ENCODE measurements at regions of chr15 and their contacts with region 1.

Region 1: GRCh38 chr15:85044251-85044853 is 62.7 kb downstream of the PDE8A start:
- DNase-seq: peak in 1 of 2 donors; percentile 31
- ATAC-seq: peak; percentile 70 to 91 (median 86)
- H3K4me3 ChIP-seq: no peak overlapping the region
- H3K27ac ChIP-seq: peak overlapping the region; percentile 54
- H3K4me1 ChIP-seq: peaks cover 28% of the 10 kb centered on the region
- H3K27me3 ChIP-seq: no peaks in the 10 kb centered on the region
- CTCF ChIP-seq: peak; percentile 69

Region 2: DNA sequence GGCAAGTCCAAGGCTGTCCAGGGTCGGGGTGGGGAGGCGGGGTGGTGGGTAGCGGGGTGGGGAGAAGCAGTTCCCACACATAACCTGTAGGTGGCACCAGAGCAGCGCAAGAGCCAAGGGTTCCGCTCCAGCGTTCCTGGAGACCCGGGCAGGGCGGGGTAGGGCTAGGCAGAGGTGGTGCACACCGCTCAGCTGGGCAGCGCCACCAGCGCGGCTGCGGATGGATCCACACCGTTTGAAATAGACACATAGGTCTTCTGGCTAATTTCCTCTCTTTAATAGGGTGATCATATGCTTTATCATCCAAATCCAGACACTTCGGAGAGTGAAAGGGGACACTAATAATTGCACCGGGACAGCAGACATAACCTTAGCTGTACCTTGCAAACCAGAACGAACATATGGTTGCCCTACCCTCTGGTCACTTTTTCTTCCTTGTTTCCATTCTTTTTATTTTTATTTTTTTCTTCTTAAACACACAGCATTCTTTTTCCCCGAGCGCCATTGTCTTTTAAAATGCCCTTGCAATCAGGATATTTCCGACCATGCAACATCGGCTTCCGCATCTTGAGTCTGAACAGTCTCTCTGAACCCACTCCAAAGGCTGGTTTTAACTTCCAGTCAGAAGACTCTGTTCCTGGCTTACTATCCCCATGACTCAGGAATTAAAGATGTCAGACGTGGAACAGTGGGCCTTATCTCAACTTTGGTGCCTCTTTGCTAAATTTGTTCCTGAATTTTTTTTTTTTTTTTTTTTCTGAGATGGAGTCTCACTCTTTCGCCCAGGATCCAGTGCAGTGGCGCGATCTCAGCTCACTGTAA is 456.1 kb before region 1 on chr15:
- intact Hi-C with region 1: loop called in 1 of 2 experiments (anchors 10 kb)
- DNase-seq: peak; percentile 85 to 92
- ATAC-seq: peak; percentile 99 to 100 (median 100)
- H3K4me3 ChIP-seq: peak overlapping the region; percentile 60
- H3K27ac ChIP-seq: no peak overlapping the region
- H3K4me1 ChIP-seq: peaks cover 4% of the 10 kb centered on the region
- H3K27me3 ChIP-seq: no peaks in the 10 kb centered on the region
- CTCF ChIP-seq: peak; percentile 85

Region 3: DNA sequence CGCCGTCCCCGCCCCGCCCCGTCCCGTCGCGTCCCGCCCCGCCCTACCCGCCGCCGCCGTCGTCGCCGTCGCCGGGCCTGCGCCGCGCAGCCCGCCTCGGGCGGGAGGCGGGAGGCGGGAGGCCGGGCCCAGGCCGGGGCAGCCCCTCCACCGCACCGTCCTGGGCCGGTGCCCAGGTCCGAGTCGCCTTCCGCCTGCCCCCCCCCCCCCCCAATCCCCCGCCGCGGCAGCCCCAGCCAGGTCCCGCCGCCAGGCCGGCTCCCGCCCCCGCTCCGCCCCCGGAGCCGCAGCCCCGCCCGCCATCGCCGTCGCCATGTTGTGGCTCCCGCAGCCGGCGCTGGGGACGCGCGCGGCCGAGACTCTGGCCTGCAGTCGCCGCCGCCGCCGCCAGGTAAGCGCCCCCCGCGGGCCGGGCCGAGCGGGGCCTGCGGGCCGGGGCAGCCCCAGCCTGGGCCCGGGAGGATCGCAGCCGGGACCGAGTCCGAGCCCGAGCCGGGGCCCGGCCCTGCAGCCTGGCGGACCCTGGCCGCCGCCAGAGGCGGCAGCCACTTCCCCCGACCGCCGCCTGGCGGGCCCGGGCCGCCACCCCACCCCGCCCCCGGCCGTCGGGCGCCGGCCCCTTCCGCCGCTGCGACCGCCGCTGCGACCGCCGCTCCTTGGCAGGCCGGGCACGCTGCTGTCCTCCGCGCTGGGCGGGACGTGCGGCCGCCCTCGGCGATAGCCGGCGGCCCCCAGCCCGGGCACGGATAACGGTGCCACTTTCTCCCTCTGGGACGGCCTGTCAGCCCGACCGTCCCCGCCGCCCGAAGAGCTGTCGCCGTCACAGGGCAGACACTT is 295.9 kb before region 1 on chr15 and contains the start of gene ZNF592:
- intact Hi-C with region 1: no loop called
- DNase-seq: peak; percentile 88 to 93
- ATAC-seq: peak; percentile 66 to 76 (median 72)
- H3K4me3 ChIP-seq: peak within 1 kb of the TSS; percentile 92
- H3K27ac ChIP-seq: peak within 1 kb of the TSS; percentile 99
- H3K4me1 ChIP-seq: peaks cover 67% of the 10 kb centered on the region
- H3K27me3 ChIP-seq: no peaks in the 10 kb centered on the region
- CTCF ChIP-seq: peak; percentile 58
- total RNA-seq, gene ZNF592: 33.4 to 39.5 (median 35.5) TPM

Region 4: DNA sequence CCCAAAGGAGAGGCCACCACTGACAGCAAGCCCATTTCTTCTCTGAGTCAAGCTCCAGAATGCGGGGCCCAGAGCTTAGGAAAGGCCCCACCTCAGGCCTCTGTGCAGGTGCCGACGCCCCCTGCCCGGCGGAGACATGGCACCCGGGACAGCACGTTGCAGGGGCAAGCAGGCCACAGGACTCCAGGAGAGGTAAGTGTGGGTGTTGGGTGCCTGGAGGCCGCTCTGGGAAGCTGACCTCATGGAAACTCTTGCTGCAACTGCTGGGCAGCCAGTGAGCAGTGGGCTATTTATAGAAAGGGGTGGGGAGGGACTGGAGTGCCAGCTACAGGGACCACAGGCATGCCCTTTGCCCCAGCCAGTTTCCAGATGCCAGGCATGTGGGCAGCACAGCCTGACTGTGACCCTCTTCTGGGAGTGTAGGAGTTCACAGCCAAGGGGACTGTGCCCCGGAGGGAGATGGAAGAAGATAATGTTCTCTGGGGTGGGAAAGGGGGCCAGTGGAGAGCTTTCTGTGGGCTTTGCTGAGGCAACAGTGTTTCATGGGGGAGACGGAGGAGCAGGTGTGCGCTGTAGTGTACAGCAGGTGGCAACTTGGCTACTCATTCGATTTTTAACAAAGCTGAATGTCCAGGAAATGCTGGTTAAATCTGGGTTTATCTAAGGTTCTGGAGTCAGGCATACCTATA is 203.5 kb before region 1 on chr15:
- intact Hi-C with region 1: loop called in 1 of 2 experiments (anchors 10 kb)
- DNase-seq: peak; percentile 80 to 93
- ATAC-seq: peak; percentile 80 to 86 (median 83)
- H3K4me3 ChIP-seq: peak overlapping the region; percentile 38
- H3K27ac ChIP-seq: peak overlapping the region; percentile 99
- H3K4me1 ChIP-seq: peaks cover 79% of the 10 kb centered on the region
- H3K27me3 ChIP-seq: no peaks in the 10 kb centered on the region
- CTCF ChIP-seq: no peak

Region 5: GRCh38 chr15:84955089-84955848 is 89.1 kb before region 1 on chr15:
- intact Hi-C with region 1: loop called (anchors 1 to 2 kb)
- DNase-seq: peak; percentile 70 to 83
- ATAC-seq: peak; percentile 86 to 98 (median 94)
- H3K4me3 ChIP-seq: peak overlapping the region; percentile 52
- H3K27ac ChIP-seq: no peak overlapping the region
- H3K4me1 ChIP-seq: peaks cover 3% of the 10 kb centered on the region
- H3K27me3 ChIP-seq: no peaks in the 10 kb centered on the region
- CTCF ChIP-seq: peak; percentile 90

Region 6: DNA sequence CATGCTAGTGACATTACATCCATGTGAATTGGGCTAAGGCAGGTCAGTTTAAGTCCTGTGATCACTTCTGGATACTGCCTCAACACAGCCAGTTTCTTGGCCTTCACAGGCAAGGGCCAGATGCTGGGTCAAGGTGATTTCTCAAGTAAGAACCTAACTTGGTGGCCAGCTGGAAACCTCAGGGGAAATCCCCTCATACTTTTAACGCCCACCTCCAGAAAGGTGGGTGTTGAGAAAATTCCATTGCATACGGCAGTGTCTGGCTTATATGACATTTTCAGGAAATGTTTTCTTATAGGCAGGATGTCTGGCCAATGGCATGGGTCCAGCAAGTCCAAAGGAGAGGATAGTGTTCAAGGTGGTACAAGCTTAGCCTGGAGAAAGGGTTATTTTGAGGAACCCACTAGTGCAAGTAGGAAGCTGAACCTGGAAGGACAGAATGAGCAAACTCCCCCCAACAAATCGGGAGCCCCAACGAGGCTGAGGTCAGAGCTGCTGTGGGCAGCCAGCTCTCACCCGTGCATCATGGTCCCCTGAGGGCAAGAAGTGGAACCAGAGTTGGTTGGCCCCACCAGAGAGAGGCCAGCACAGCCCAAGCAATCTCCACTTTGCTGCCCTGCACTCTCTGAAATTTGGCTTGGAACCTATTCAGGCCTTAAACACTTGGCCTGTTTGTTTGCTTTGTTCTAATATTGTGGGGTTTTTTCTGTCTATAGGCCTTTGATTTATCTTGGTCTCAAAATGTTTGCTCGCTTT is 72.8 kb after region 1 on chr15:
- intact Hi-C with region 1: no loop called
- DNase-seq: no peak
- ATAC-seq: no peak
- H3K4me3 ChIP-seq: no peak overlapping the region
- H3K27ac ChIP-seq: no peak overlapping the region
- H3K4me1 ChIP-seq: peaks cover 5% of the 10 kb centered on the region
- H3K27me3 ChIP-seq: no peaks in the 10 kb centered on the region
- CTCF ChIP-seq: no peak

Region 7: GRCh38 chr15:85646538-85647091 is 602.3 kb after region 1 on chr15:
- intact Hi-C with region 1: no loop called
- DNase-seq: no peak
- ATAC-seq: peak in 1 of 4 donors; percentile 39
- H3K4me3 ChIP-seq: no peak overlapping the region
- H3K27ac ChIP-seq: peak overlapping the region; percentile 28
- H3K4me1 ChIP-seq: peaks cover 40% of the 10 kb centered on the region
- H3K27me3 ChIP-seq: no peaks in the 10 kb centered on the region
- CTCF ChIP-seq: no peak

Measured in psoas muscle (tissue), 8 donors.